Dendritic cell treated with granulocyte-macrophage colony-stimulating factor and Interleukin-4, amounts not matched to agents 40 ng/mL and 50 ng/mL, for 4 days (primary cell): ENCODE measurements at regions of chr5 and their contacts with region 1.

Region 1: GRCh38 chr5:67182301-67182790 is 14.3 kb downstream of the CD180 start:
- H3K4me3 Mint-ChIP-seq: peak overlapping the region; percentile 53
- H3K27ac Mint-ChIP-seq: peak overlapping the region; percentile 95
- H3K4me1 Mint-ChIP-seq: peaks cover 78% of the 10 kb centered on the region
- H3K27me3 Mint-ChIP-seq: no peaks in the 10 kb centered on the region

Region 2: DNA sequence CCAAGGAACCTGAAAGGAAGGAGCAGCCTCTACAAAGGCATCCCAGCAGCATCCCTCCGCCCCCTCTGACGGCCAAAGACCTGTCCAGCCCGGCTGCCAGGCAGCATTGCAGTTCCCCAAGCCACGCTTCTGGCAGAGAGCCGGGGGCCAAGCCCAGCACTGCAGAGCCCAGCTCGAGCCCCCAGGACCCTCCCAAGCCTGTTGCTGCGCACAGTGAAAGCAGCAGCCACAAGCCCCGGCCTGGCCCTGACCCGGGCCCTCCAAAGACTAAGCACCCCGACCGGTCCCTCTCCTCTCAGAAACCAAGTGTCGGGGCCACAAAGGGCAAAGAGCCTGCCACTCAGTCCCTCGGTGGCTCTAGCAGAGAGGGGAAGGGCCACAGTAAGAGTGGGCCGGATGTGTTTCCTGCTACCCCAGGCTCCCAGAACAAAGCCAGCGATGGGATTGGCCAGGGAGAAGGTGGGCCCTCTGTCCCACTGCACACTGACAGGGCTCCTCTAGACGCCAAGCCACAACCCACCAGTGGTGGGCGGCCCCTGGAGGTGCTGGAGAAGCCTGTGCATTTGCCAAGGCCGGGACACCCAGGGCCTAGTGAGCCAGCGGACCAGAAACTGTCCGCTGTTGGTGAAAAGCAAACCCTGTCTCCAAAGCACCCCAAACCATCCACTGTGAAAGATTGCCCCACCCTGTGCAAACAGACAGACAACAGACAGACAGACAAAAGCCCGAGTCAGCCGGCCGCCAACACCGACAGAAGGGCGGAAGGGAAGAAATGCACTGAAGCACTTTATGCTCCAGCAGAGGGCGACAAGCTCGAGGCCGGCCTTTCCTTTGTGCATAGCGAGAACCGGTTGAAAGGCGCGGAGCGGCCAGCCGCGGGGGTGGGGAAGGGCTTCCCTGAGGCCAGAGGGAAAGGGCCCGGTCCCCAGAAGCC is 16.6 kb before region 1 on chr5:
- intact Hi-C with region 1: loop called (anchors 2 kb)
- H3K4me3 Mint-ChIP-seq: peak overlapping the region; percentile 77
- H3K27ac Mint-ChIP-seq: peak overlapping the region; percentile 95
- H3K4me1 Mint-ChIP-seq: peaks cover 56% of the 10 kb centered on the region
- H3K27me3 Mint-ChIP-seq: no peaks in the 10 kb centered on the region